H1 (cell line): ENCODE measurements at regions of chr14 and their contacts with region 1.

Region 1: DNA sequence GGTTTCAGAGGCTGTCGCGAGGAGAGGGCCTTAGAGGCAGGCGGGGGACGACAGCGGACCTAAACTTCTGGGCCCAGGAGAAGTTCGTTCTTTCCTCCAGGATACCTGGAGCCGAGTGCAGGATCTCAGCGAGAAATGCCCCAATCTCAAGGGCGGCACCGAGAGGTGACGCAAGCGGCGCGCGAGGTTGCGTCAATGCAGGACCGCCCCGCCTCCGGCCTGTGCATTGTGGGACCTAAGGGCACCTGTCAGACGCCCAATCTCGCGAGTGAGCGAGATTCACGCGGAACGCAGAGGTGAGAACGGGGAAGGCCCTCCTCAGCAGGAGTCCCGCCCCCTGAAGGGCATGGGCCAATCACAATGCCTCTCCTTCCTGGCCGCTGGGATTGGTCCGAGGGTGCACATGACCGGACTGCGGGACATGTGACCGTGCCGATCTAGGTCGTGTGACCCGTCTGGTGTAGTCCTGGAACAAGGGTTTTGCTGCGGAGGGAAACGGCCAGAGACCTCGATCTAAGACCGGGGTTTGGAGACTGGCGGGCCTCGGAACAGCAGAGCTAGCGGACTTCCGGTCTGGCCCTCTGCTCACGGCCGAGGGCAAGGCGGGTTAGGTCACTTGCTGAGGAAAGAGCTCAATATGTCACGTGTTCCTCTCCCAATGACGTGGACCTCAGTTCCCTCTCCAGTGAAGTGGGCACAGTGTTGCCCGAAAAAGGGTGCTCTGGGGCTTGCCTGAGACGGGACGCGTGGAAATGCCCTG is 16.3 kb upstream of the DYNC1H1 start:
- DNase-seq: peak; percentile 99 to 100
- H3K4me3 ChIP-seq: peak overlapping the region; percentile 72 to 96 (median 90)
- H3K27ac ChIP-seq: peak overlapping the region; percentile 84
- H3K4me1 ChIP-seq: peaks cover 0 to 12% (median 5%) of the 10 kb centered on the region in 4 experiments; a peak in 5 of 7 replicates
- H3K27me3 ChIP-seq: peaks cover 18 to 29% (median 27%) of the 10 kb centered on the region in 4 experiments
- CTCF ChIP-seq: no peak
- EP300 ChIP-seq: peak in 1 of 2 experiments; percentile 66; a peak in 1 of 3 replicates
- POLR2A ChIP-seq: peak; percentile 64 to 93
- RAD21 ChIP-seq: no peak

Region 2: GRCh38 chr14:101809671-101810514 is 138.2 kb before region 1 on chr14:
- CTCF ChIA-PET with region 1: interaction called, 3 read pairs
- POLR2A ChIA-PET with region 1: interaction called, 12 read pairs
- DNase-seq: peak; percentile 63 to 75
- H3K4me3 ChIP-seq: peak overlapping the region; percentile 82 to 99 (median 91)
- H3K27ac ChIP-seq: peak overlapping the region; percentile 98
- H3K4me1 ChIP-seq: peaks cover 0 to 10% (median 6%) of the 10 kb centered on the region in 4 experiments
- H3K27me3 ChIP-seq: no peaks in the 10 kb centered on the region
- CTCF ChIP-seq: no peak
- EP300 ChIP-seq: peak in 1 of 2 experiments; percentile 64; a peak in 1 of 3 replicates
- POLR2A ChIP-seq: peak; percentile 74 to 87
- RAD21 ChIP-seq: no peak

Region 3: GRCh38 chr14:101917413-101918017 is 30.6 kb before region 1 on chr14:
- CTCF ChIA-PET with region 1: interaction called, 4 read pairs
- POLR2A ChIA-PET with region 1: interaction called, 21 read pairs
- DNase-seq: peak in 1 of 2 experiments; percentile 54
- H3K4me3 ChIP-seq: peak overlapping the region in 1 of 4 experiments; percentile 40; a peak in 2 of 8 replicates
- H3K27ac ChIP-seq: no peak overlapping the region
- H3K4me1 ChIP-seq: peaks cover 3 to 30% (median 18%) of the 10 kb centered on the region in 4 experiments
- H3K27me3 ChIP-seq: no peaks in the 10 kb centered on the region; a peak in 1 of 7 replicates
- CTCF ChIP-seq: no peak
- EP300 ChIP-seq: no peak
- POLR2A ChIP-seq: no peak
- RAD21 ChIP-seq: no peak

Region 4: GRCh38 chr14:101961011-101961721 is 13.1 kb after region 1 on chr14:
- CTCF ChIA-PET with region 1: interaction called, 23 read pairs
- POLR2A ChIA-PET with region 1: interaction called, 7 read pairs
- DNase-seq: peak; percentile 70 to 84
- H3K4me3 ChIP-seq: no peak overlapping the region
- H3K27ac ChIP-seq: no peak overlapping the region
- H3K4me1 ChIP-seq: peaks cover 0 to 3% (median under 1%) of the 10 kb centered on the region in 4 experiments; a peak in 2 of 7 replicates
- H3K27me3 ChIP-seq: peaks cover 4 to 26% (median 14%) of the 10 kb centered on the region in 4 experiments
- CTCF ChIP-seq: peak; percentile 92 to 96 (median 95)
- EP300 ChIP-seq: no peak
- POLR2A ChIP-seq: no peak
- RAD21 ChIP-seq: peak; percentile 81 to 91

Region 5: DNA sequence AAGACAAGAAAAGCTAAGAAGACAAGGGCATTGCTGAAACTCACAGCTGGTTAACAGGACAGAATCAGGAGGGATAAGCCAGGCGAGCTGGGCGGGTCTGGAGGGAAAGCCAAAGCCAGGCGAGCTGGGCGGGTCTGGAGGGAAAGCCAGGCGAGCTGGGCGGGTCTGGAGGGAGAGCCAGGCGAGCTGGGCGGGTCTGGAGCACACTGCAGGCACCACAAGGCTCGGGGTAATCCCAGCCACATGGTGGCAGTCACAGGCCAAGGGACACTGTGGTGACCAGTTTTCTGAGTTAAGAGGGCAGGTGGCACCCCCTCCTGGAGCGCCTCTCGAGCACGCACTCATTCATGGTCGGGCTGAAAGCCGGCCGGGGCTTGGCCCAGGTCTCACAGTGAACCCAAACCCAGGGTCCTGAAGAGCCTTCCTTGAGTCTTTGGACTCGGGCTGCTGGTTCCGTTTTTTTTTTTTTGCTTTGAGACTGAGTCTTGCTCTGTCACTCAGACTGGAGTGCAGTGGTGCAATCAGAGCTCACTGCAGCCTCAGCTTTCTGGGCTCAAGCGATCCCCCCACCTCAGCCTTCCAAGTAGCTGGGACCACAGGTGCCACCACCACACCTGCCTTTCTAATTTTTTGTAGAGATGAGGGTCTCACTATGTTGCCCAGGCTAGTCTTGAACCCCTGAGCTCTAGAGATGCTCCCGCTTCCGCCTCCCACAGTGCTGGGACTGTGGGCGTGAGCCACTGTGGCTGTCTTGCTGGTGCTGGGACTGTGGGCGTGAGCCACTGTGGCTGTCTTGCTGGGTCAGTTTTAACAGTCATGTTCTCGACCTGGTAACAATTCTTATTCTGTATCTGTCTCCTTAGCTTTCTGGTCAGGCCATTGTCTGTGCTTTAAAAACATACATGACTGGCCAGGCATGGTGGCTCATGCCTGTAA is 98.5 kb after region 1 on chr14:
- CTCF ChIA-PET with region 1: no interaction called
- POLR2A ChIA-PET with region 1: no interaction called
- DNase-seq: peak; percentile 75 to 81
- H3K4me3 ChIP-seq: no peak overlapping the region
- H3K27ac ChIP-seq: no peak overlapping the region
- H3K4me1 ChIP-seq: no peaks in the 10 kb centered on the region
- H3K27me3 ChIP-seq: no peaks in the 10 kb centered on the region
- CTCF ChIP-seq: peak; percentile 75 to 98 (median 80)
- EP300 ChIP-seq: no peak
- POLR2A ChIP-seq: 0 out of 3 replicates have a peak, but pooled peaks of 1 of the 2 experiments have one; percentile 15
- RAD21 ChIP-seq: peak; percentile 80 to 84